ENCODE measurements at regions of chr9 and their contacts with region 1.

Region 1: DNA sequence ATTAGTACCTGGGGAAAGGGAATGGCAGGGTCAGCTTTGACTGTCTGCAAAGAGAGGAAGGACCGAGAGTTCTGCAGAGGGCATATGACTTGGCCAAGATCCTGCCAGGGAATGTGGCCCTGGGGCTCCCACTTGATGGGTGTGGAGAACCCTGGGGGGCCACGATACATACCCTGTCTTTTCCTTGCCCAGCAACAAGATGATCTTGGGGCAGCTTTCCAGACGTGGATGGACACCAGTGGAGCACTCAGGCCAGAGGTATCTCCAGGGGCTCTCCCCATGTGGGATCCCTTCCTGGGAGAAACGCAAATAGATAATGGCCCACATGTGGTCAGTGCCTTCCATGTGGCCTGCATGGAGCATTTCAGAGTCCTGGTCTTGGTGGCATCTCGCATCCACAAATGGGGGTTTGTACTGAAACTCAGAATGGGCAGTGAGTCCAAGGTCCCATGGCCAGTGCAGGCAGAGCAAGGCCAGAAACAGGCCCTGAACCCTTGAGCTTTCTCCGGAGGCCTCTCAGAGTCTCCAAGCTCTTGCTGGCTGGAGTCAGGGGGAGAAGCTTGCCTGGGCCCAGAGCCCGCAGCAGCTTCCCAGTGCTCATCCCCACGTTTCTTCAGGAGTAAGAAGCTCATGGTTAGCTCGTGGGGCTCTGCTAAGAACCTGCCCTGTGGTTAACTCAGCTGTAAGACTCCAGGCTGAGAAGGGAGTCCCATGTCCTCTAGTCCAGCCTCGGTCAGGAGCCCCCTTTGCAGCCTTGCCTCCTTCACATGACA is 18.3 kb upstream of the ORM1 start:
- DNase-seq: peak in 3 of 10 donors; percentile 7 to 52 (median 35)

Region 2: DNA sequence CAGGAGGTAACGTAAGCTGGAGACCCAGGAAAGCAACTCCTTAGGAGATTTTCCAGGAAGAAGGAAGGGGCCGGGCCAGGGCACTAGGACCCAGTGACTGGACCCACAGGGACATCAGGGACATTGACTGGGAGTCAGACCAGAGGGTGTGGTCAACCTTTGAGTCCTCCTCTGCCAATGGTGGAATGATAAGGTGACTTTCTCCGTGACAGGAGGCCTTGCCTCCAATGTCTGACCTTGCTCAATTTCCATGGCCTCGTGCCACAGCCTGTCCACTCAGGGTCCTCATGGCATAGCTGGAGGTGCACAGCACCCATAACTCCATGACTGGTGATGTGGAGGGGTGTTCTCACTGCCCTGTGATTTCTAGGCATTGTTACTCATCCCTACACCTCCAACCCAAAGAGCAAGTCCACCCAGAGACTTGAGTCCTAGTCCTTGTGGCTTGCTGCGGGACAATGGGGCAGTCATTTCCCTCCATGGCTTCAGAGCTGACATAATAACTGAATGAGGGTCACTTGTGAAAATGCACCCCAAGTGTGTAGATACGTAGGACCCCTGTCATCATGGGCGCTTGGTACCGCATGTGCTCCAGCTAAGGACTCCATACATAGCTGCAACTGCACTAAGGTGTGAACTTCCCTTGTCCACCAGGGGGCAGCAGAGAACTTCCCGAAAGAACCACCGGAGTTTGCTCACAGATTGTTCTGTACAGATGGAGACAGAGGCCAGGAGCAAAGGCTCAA is 222.4 kb before region 1 on chr9:
- intact Hi-C with region 1: loop called (anchors 1 kb)
- DNase-seq: peak; percentile 69 to 97 (median 93)

Region 3: GRCh38 chr9:114385412-114386181 is 81.0 kb after region 1 on chr9:
- intact Hi-C with region 1: no loop called
- DNase-seq: peak in 9 of 10 donors; percentile 31 to 91 (median 59)

Measured in posterior cingulate gyrus (tissue), 11 donors.